Activated CD4-positive, alpha-beta T cell treated with anti-CD3 and anti-CD28 coated beads, Interleukin-2, amount 10 ng/mL, durations not matched to agents 7 days and 5 days (primary cell): ENCODE measurements at regions of chr10 and their contacts with region 1.

Region 1: GRCh38 chr10:49407552-49408137 is 11.8 kb upstream of the DRGX start:
- DNase-seq: peak; percentile 81
- H3K4me3 Mint-ChIP-seq: no peak overlapping the region
- H3K27ac Mint-ChIP-seq: no peak overlapping the region
- H3K4me1 Mint-ChIP-seq: no peaks in the 10 kb centered on the region
- H3K27me3 Mint-ChIP-seq: peaks cover 27% of the 10 kb centered on the region

Region 2: GRCh38 chr10:49512121-49512809 is 104.6 kb after region 1 on chr10:
- CTCF ChIA-PET with region 1: interaction called, 17 read pairs
- POLR2A ChIA-PET with region 1: no interaction called
- DNase-seq: peak; percentile 38
- H3K4me3 Mint-ChIP-seq: no peak overlapping the region
- H3K27ac Mint-ChIP-seq: no peak overlapping the region
- H3K4me1 Mint-ChIP-seq: peaks cover 23% of the 10 kb centered on the region
- H3K27me3 Mint-ChIP-seq: peaks cover 11% of the 10 kb centered on the region

Region 3: DNA sequence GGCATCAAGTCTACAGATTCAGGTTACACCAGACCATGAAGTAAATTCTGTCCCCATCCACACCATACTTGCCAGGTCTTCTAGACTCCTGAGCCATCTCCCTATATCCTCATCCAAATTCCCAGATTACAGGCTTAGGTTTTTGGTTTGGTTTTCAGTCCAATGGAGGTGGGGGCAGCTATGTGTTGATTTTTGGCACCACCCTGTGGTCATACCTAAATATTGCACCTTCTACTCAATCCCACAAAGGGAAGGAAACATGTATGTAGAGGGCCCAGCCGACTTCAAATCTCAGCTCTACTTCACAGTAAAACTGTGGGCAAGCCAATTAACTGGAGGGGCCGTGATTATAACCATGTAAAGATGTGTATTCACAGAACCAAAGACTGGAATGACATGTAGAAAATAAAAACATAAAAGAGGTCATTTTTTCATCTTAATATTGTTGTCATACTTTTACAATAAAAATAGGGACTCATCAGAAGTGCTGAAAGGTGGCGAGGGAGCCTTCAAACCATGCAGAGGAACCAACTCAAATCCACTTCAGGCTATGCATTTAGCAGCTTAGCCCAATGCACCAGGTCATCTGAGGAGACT is 111.4 kb after region 1 on chr10:
- CTCF ChIA-PET with region 1: interaction called, 11 read pairs
- POLR2A ChIA-PET with region 1: no interaction called
- DNase-seq: peak; percentile 46
- H3K4me3 Mint-ChIP-seq: no peak overlapping the region
- H3K27ac Mint-ChIP-seq: no peak overlapping the region
- H3K4me1 Mint-ChIP-seq: peaks cover 1% of the 10 kb centered on the region
- H3K27me3 Mint-ChIP-seq: no peaks in the 10 kb centered on the region